ENCODE measurements at regions of chr1 and their contacts with region 1.

Region 1: GRCh38 chr1:159071970-159072582 is 4.5 kb downstream of the AIM2 start:
- DNase-seq: peak in 7 of 9 donors; percentile 8 to 43 (median 32)
- ATAC-seq: peak; percentile 36
- H3K4me3 ChIP-seq: no peak overlapping the region
- H3K4me3 Mint-ChIP-seq: no peak overlapping the region
- H3K27ac ChIP-seq: no peak overlapping the region
- H3K27ac Mint-ChIP-seq: no peak overlapping the region
- H3K4me1 ChIP-seq: peaks cover 15 to 27% of the 10 kb centered on the region in 2 donors
- H3K4me1 Mint-ChIP-seq: peaks cover 8 to 61% (median 16%) of the 10 kb centered on the region in 7 donors
- H3K27me3 ChIP-seq: no peaks in the 10 kb centered on the region
- H3K27me3 Mint-ChIP-seq: peaks cover 0 to 5% (median 0%) of the 10 kb centered on the region in 5 donors

Region 2: DNA sequence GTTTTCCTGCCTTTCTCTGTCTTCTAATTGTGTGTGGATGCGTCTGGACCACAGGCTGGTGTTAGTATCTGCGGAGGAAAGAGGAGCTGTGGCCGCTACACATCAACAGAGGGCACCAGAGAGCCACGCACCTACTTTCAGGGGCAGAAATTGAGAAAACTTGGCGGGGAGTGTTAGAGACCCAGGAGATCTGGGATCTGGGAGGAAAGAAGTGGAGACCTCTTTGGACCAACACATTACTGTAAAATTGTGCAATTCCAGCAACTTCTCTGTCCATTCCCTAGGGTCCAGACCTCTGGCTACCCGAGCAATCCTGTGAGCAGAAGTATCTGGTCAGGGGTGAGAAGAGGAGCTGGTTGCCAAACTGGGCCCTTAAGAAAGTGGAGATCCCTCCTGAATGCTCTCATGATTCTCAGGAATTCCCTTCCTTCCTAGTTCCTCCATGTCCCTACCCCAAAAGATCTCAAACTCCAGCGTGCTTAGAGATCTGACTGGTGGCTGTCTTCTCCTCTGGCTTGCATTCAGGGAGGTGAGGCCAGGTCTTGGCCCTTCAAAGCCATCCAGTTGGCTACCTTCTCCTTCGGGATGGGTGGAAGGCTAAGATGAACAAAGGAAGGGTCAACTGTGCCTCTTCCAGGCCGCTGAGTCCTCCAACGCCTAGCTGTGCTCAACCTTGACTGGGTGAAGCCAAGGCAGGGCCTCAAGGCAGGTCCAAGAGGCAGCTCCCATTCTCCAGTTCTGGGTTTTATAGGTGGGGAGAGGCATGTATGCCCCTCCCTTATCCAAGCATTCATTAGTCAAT is 1079.8 kb before region 1 on chr1:
- CTCF ChIA-PET with region 1: no interaction called
- POLR2A ChIA-PET with region 1: no interaction called
- intact Hi-C with region 1: loop called in 1 of 2 experiments (anchors 10 kb)
- DNase-seq: peak in 5 of 9 donors; percentile 11 to 32 (median 29)
- ATAC-seq: peak; percentile 64
- H3K4me3 ChIP-seq: no peak overlapping the region
- H3K4me3 Mint-ChIP-seq: peak overlapping the region in 9 of 10 donors; percentile 21 to 84 (median 65)
- H3K27ac ChIP-seq: no peak overlapping the region
- H3K27ac Mint-ChIP-seq: no peak overlapping the region
- H3K4me1 ChIP-seq: no peaks in the 10 kb centered on the region
- H3K4me1 Mint-ChIP-seq: peaks cover 0 to 19% (median 11%) of the 10 kb centered on the region in 7 donors
- H3K27me3 ChIP-seq: no peaks in the 10 kb centered on the region
- H3K27me3 Mint-ChIP-seq: peaks cover 43 to 64% (median 52%) of the 10 kb centered on the region in 5 donors

Region 3: DNA sequence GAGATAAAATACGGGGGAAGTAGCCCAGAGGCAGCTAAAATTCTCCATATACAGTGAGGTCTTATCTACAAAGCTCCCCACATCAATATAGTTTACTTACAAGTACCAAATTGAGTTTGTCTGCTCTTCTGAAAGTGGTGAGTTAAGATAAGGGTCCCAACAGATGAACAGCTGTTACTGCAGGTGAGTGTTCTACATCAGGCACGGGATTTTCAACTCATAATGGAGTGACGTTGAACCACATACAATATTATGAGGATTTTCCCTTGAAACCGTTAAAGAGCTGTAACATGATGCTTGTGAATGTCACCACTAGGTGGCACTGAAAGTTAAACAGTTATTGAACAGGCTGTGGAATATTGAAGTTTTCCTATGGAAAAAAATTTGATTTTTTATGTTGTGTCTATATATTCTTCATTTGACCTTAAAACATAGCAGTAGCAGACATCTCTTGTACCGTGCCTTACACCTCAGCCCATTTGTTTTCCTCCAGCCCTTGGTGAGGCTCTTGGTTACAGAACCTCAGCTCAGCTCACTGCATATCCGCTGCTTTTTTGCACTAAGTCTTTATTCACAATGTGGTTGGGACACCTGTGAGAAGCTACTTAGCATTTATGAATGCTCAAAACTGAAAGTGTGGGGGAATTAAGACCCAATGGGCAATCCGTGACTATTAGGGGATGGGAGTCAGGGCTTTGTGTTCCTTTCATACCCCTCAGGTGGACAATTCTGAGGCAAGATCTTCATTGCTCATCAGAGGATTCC is 868.2 kb before region 1 on chr1:
- CTCF ChIA-PET with region 1: interaction called, 60 read pairs
- POLR2A ChIA-PET with region 1: no interaction called
- intact Hi-C with region 1: loop called (anchors 1 kb)
- DNase-seq: peak in 7 of 9 donors; percentile 9 to 49 (median 44)
- ATAC-seq: peak; percentile 76
- H3K4me3 ChIP-seq: no peak overlapping the region
- H3K4me3 Mint-ChIP-seq: peak overlapping the region in 5 of 10 donors; percentile 2 to 56 (median 32)
- H3K27ac ChIP-seq: no peak overlapping the region
- H3K27ac Mint-ChIP-seq: no peak overlapping the region
- H3K4me1 ChIP-seq: peaks cover 3 to 7% of the 10 kb centered on the region in 2 donors
- H3K4me1 Mint-ChIP-seq: peaks cover 8 to 18% (median 14%) of the 10 kb centered on the region in 7 donors
- H3K27me3 ChIP-seq: no peaks in the 10 kb centered on the region
- H3K27me3 Mint-ChIP-seq: peaks cover 32 to 51% (median 44%) of the 10 kb centered on the region in 5 donors

Region 4: DNA sequence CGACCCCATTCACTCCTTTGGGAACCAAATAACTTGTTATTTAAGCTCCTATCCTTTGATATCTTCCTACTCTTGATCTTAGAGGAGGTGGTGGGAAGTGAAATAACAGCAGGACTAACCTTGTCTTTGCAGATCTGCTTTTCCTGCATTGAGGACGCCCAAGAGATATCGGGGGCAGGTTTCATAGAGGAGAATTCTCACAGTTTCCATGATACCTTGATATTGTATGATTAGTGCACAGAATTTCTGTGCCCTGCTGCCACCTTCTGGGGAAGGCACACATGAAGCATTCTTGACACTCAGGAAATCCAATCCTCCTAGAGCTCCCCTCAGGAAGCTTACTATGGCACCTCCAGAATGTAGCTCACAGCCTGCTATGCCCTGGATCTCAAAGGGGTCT is 742.3 kb before region 1 on chr1:
- CTCF ChIA-PET with region 1: interaction called, 3 read pairs
- POLR2A ChIA-PET with region 1: no interaction called
- intact Hi-C with region 1: loop called in 1 of 2 experiments (anchors 5 kb)
- DNase-seq: peak in 1 of 9 donors; percentile 15
- ATAC-seq: no peak
- H3K4me3 ChIP-seq: no peak overlapping the region
- H3K4me3 Mint-ChIP-seq: no peak overlapping the region
- H3K27ac ChIP-seq: no peak overlapping the region
- H3K27ac Mint-ChIP-seq: no peak overlapping the region
- H3K4me1 ChIP-seq: no peaks in the 10 kb centered on the region
- H3K4me1 Mint-ChIP-seq: peaks cover 0 to 16% (median 10%) of the 10 kb centered on the region in 7 donors
- H3K27me3 ChIP-seq: no peaks in the 10 kb centered on the region
- H3K27me3 Mint-ChIP-seq: peaks cover 0 to 23% (median 14%) of the 10 kb centered on the region in 5 donors

Region 5: DNA sequence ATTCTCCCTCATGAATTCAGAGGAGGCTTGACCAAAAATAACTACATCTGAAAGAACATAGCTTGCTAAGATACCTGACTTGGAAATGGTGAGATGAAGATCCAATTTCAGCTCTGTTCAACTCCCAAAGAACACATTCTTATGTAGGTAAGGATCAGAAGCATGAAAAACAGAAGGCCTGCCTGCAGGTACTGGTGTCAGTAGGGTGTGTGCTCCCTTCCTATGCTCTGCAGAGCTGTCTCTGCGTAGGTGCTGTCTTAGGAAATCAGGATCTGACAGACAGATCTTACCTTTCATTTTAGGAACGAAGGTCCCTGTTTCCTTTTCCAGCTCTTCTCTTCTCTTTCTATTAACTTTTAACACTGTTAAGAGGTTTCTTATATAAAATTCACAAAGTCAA is 366.0 kb before region 1 on chr1:
- CTCF ChIA-PET with region 1: no interaction called
- POLR2A ChIA-PET with region 1: no interaction called
- intact Hi-C with region 1: no loop called
- DNase-seq: no peak
- ATAC-seq: no peak
- H3K4me3 ChIP-seq: no peak overlapping the region
- H3K4me3 Mint-ChIP-seq: no peak overlapping the region
- H3K27ac ChIP-seq: no peak overlapping the region
- H3K27ac Mint-ChIP-seq: no peak overlapping the region
- H3K4me1 ChIP-seq: no peaks in the 10 kb centered on the region
- H3K4me1 Mint-ChIP-seq: no peaks in the 10 kb centered on the region
- H3K27me3 ChIP-seq: no peaks in the 10 kb centered on the region
- H3K27me3 Mint-ChIP-seq: peaks cover 2 to 17% (median 5%) of the 10 kb centered on the region in 5 donors

Region 6: DNA sequence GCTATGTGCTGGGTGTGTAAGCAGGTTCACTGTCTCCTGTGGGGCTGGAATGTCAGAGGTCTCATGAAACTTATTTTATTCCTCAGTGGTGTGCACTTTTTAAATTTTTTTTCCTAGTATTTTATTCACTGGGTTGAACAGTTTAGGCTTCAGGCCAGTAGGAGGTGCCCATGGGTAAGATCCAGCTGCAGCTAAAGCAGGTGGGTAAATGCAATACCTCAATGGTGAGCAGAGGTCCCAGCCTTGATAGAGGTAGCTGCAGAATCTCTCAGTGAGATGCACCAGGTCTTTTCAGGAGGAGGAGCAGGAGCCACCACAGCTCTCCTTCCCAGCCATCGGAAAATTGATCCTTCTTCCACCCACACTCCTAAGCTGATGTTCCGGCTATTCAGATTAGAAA is 278.5 kb before region 1 on chr1:
- CTCF ChIA-PET with region 1: interaction called, 3 read pairs
- POLR2A ChIA-PET with region 1: no interaction called
- intact Hi-C with region 1: loop called in 1 of 2 experiments (anchors 1 kb)
- DNase-seq: peak in 3 of 9 donors; percentile 1 to 18 (median 8)
- ATAC-seq: peak; percentile 67
- H3K4me3 ChIP-seq: no peak overlapping the region
- H3K4me3 Mint-ChIP-seq: no peak overlapping the region
- H3K27ac ChIP-seq: no peak overlapping the region
- H3K27ac Mint-ChIP-seq: no peak overlapping the region
- H3K4me1 ChIP-seq: no peaks in the 10 kb centered on the region
- H3K4me1 Mint-ChIP-seq: peaks cover 0 to 4% (median 0%) of the 10 kb centered on the region in 7 donors
- H3K27me3 ChIP-seq: no peaks in the 10 kb centered on the region
- H3K27me3 Mint-ChIP-seq: peaks cover under 1 to 33% (median 9%) of the 10 kb centered on the region in 5 donors

Region 7: DNA sequence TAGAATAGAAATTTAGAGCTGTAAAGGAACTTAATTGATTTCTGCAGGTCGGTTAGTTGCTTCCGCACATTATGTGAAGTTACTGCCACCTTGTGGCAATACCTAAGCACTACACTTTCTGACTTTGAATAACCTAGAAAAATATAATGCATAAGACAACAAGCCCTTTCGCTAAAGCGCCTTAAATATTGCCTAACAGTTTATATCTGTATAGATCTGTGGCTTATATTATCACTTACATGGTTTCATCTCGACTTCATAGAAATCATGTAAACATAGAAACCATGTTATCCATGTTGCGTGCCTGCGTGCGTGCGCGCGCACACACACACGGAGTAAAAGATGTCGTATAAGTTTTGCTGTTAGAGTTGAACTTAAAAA is 73.3 kb before region 1 on chr1:
- CTCF ChIA-PET with region 1: interaction called, 4 read pairs
- POLR2A ChIA-PET with region 1: no interaction called
- intact Hi-C with region 1: loop called in 1 of 2 experiments (anchors 1 kb)
- DNase-seq: peak in 7 of 9 donors; percentile 43 to 74 (median 65)
- ATAC-seq: peak; percentile 88
- H3K4me3 ChIP-seq: no peak overlapping the region
- H3K4me3 Mint-ChIP-seq: peak overlapping the region in 7 of 10 donors; percentile 1 to 65 (median 44)
- H3K27ac ChIP-seq: no peak overlapping the region
- H3K27ac Mint-ChIP-seq: peak overlapping the region in 5 of 9 donors; percentile 10 to 70 (median 48)
- H3K4me1 ChIP-seq: peaks cover 6 to 21% of the 10 kb centered on the region in 2 donors
- H3K4me1 Mint-ChIP-seq: peaks cover 6 to 36% (median 16%) of the 10 kb centered on the region in 7 donors
- H3K27me3 ChIP-seq: no peaks in the 10 kb centered on the region
- H3K27me3 Mint-ChIP-seq: no peaks in the 10 kb centered on the region

Region 8: GRCh38 chr1:159054427-159054826 is 17.6 kb before region 1 on chr1:
- CTCF ChIA-PET with region 1: interaction called, 3 read pairs
- POLR2A ChIA-PET with region 1: interaction called, 4 read pairs
- intact Hi-C with region 1: loop called in 1 of 2 experiments (anchors 2 kb)
- DNase-seq: no peak
- ATAC-seq: no peak
- H3K4me3 ChIP-seq: no peak overlapping the region
- H3K4me3 Mint-ChIP-seq: peak overlapping the region in 1 of 10 donors; percentile 6
- H3K27ac ChIP-seq: peak overlapping the region; percentile 9
- H3K27ac Mint-ChIP-seq: peak overlapping the region in 6 of 9 donors; percentile 14 to 82 (median 60)
- H3K4me1 ChIP-seq: peaks cover 0 to 12% of the 10 kb centered on the region in 2 donors
- H3K4me1 Mint-ChIP-seq: peaks cover 15 to 48% (median 28%) of the 10 kb centered on the region in 7 donors
- H3K27me3 ChIP-seq: no peaks in the 10 kb centered on the region
- H3K27me3 Mint-ChIP-seq: no peaks in the 10 kb centered on the region

Region 9: DNA sequence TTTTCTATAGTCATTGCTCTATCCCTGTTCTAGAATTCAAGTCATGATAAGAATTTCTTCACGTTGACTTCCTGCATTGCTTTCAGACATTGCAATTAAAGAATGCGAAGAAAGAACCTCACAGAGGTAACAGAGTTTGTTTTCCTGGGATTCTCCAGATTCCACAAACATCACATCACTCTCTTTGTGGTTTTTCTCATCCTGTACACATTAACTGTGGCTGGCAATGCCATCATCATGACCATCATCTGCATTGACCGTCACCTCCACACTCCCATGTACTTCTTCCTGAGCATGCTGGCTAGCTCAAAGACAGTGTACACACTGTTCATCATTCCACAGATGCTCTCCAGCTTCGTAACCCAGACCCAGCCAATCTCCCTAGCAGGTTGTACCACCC is 526.1 kb after region 1 on chr1:
- CTCF ChIA-PET with region 1: no interaction called
- POLR2A ChIA-PET with region 1: no interaction called
- intact Hi-C with region 1: no loop called
- DNase-seq: no peak
- ATAC-seq: no peak
- H3K4me3 ChIP-seq: no peak overlapping the region
- H3K4me3 Mint-ChIP-seq: no peak overlapping the region
- H3K27ac ChIP-seq: no peak overlapping the region
- H3K27ac Mint-ChIP-seq: no peak overlapping the region
- H3K4me1 ChIP-seq: no peaks in the 10 kb centered on the region
- H3K4me1 Mint-ChIP-seq: no peaks in the 10 kb centered on the region
- H3K27me3 ChIP-seq: no peaks in the 10 kb centered on the region
- H3K27me3 Mint-ChIP-seq: peaks cover 0 to 73% (median 58%) of the 10 kb centered on the region in 5 donors